Activated CD4-positive, alpha-beta T cell treated with anti-CD3 and anti-CD28 coated beads, Interleukin-2, amount 10 ng/mL, durations not matched to agents 24 days and 14 days (primary cell): ENCODE measurements at regions of chr12 and their contacts with region 1.

Region 1: GRCh38 chr12:14167005-14167628 is 185.7 kb upstream of the GRIN2B start:
- DNase-seq: peak; percentile 81
- H3K4me3 Mint-ChIP-seq: no peak overlapping the region
- H3K27ac Mint-ChIP-seq: no peak overlapping the region
- H3K4me1 Mint-ChIP-seq: peaks cover 3% of the 10 kb centered on the region
- H3K27me3 Mint-ChIP-seq: peaks cover 7% of the 10 kb centered on the region

Region 2: DNA sequence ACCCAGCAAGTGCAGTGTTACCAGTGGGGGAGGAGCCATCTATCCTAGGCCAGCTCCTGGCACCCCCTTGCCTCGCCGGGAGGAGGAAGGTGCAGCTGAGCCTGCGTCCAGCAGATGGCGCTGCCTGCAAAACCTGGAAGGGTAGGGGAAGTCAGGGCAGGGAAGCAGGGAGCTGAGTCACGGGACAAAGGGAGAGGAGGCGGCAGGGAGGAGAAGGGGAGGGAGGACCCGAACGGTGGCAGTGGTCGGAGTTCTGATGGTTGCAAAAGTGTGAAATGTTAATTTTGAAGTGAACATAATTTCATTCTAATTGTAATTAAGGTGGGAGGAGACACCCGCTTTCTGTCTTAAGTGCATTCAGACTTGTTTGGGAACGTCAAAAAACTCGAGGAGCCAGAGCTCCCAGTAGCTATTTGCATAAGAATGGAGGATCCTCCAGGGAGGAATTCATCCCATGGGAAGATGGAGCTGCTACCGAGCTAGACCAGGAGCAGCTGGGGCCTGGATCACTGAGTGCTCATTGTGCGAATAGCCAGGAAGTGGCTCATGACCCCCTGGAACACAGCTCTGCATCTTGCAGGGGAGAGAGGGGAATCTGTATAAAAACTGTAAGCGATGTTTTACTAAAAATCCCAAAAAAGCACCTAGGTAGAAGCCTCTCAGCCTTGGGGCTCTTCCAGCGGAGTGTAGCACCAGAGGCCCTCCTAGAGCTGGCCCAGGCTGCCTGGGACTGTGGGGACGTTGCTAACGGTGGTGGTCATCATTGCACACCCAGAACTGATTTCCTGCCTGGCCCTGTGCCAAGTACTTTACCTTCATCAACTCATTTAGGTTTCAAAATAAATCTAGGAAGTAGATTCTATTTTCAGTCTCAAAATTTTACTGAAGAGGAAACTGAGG is 911.1 kb before region 1 on chr12:
- intact Hi-C with region 1: loop called (anchors 5 kb)
- DNase-seq: peak; percentile 93
- H3K4me3 Mint-ChIP-seq: no peak overlapping the region
- H3K27ac Mint-ChIP-seq: no peak overlapping the region
- H3K4me1 Mint-ChIP-seq: peaks cover 3% of the 10 kb centered on the region
- H3K27me3 Mint-ChIP-seq: peaks cover 12% of the 10 kb centered on the region

Region 3: GRCh38 chr12:13278249-13278787 is 888.8 kb before region 1 on chr12:
- intact Hi-C with region 1: loop called (anchors 5 kb)
- DNase-seq: peak; percentile 87
- H3K4me3 Mint-ChIP-seq: no peak overlapping the region
- H3K27ac Mint-ChIP-seq: no peak overlapping the region
- H3K4me1 Mint-ChIP-seq: peaks cover 3% of the 10 kb centered on the region
- H3K27me3 Mint-ChIP-seq: peaks cover 34% of the 10 kb centered on the region

Region 4: GRCh38 chr12:13864081-13864673 is 302.9 kb before region 1 on chr12:
- intact Hi-C with region 1: loop called (anchors 1 kb)
- DNase-seq: peak; percentile 83
- H3K4me3 Mint-ChIP-seq: no peak overlapping the region
- H3K27ac Mint-ChIP-seq: no peak overlapping the region
- H3K4me1 Mint-ChIP-seq: no peaks in the 10 kb centered on the region
- H3K27me3 Mint-ChIP-seq: peaks cover 1% of the 10 kb centered on the region

Region 5: DNA sequence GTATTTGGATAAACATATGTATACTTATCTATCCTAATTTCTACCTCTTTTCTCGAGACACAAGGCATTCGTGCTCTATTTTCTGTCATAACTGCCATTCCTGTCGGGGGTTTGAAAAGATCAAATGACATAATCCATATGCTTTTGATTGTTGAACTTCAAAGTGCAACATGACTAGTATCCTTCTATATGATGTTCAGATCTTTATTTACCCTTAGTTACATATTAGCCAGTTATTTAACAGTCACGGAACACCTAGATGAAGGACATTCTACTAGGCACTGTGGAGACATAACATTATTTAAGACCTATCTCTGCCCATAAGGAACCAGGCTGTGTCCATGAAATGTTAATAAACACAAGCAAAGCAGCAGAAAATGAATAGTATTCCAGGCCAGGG is 174.5 kb before region 1 on chr12:
- intact Hi-C with region 1: no loop called
- DNase-seq: no peak
- H3K4me3 Mint-ChIP-seq: no peak overlapping the region
- H3K27ac Mint-ChIP-seq: no peak overlapping the region
- H3K4me1 Mint-ChIP-seq: no peaks in the 10 kb centered on the region
- H3K27me3 Mint-ChIP-seq: no peaks in the 10 kb centered on the region

Region 6: GRCh38 chr12:14238221-14238792 is 71.2 kb after region 1 on chr12:
- intact Hi-C with region 1: no loop called
- DNase-seq: no peak
- H3K4me3 Mint-ChIP-seq: no peak overlapping the region
- H3K27ac Mint-ChIP-seq: no peak overlapping the region
- H3K4me1 Mint-ChIP-seq: peaks cover 20% of the 10 kb centered on the region
- H3K27me3 Mint-ChIP-seq: no peaks in the 10 kb centered on the region